HEK293 (cell line): ENCODE measurements at regions of chr22 and their contacts with region 1.

Region 1: DNA sequence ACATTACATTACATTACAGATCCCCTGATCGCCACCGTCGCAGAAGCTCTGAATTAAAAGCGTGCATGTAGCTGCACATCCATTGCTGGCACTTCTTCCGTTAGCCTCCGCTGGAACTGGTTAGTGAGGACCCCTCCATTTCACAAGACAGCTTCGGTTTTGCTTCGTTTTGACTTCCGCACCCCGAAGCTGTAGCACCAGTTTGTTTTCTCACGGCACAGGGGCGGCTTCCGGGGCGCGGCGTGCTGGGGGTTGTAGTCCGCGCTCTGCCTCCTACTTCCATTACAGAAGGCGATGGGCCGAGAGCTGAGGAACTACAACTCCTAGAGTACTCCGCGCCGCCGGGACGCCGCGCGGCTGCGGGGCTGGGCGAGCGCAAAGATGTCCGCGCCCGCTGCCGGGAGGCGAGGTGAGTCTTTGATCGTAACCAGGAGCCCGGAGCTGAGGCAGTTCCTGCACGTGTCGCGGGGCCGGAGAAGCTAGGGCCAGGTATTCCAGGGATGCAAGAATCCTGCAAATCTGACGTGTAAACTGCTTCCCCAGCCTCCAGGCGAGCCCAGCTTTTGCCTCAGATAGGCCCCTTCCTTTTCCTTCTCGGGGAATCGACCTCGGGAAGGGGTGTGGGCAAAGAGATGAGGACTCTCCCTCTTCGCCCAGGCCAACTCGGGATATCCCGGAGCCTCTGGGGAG is at the start of gene PEX26:
- H3K4me3 ChIP-seq: peak within 1 kb of the TSS; percentile 96
- H3K27ac ChIP-seq: peak within 1 kb of the TSS; percentile 67
- H3K4me1 ChIP-seq: no peaks in the 10 kb centered on the region
- CTCF ChIP-seq: no peak

Region 2: DNA sequence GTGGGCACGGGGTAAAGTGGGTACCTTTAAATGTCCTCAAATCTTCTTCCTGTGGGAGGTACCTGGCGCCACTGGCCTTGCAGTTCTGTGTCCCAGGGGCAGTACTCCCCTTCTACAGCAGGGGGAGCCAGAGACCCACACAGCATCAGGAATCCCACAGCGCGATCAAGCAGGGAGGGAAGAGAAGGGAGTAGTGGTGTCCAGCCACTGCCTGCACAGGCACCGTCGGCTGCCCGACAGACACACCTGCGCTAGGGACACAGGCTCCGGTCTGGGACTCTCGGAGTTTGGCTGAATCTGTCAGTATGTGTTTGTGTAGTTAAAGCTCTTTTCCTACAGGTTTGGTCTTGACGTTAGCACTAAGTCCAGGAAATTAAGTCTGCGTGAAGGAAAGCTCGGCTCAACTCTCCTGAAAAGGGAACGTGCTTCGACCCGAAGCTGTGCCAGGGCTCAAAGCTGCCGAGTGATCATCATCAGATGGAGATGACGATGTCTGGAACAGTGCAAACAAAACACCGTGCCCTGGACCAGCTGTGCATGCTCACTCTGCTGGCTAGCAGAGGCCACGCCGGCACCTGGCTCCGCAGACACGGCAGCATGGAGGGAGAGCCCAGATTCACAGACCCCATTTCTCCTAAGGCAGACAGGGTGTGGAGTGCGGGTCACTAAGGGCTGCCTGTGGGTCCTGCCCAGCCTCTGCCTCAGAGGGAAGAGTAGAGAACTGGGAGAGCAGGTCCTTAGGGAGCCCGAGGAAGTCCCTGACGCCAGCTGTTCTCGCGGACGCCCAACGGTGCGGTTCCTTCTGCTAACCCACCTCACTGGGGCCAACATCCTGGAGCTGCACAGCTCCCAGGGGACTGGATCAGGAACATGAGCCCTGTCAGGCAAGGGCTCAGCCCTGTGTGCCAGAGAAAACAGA is 247.5 kb before region 1 on chr22:
- CTCF ChIA-PET with region 1: interaction called, 279 read pairs
- POLR2A ChIA-PET with region 1: interaction called, 5 read pairs
- H3K4me3 ChIP-seq: no peak overlapping the region
- H3K27ac ChIP-seq: no peak overlapping the region
- H3K4me1 ChIP-seq: no peaks in the 10 kb centered on the region
- CTCF ChIP-seq: peak; percentile 96

Region 3: DNA sequence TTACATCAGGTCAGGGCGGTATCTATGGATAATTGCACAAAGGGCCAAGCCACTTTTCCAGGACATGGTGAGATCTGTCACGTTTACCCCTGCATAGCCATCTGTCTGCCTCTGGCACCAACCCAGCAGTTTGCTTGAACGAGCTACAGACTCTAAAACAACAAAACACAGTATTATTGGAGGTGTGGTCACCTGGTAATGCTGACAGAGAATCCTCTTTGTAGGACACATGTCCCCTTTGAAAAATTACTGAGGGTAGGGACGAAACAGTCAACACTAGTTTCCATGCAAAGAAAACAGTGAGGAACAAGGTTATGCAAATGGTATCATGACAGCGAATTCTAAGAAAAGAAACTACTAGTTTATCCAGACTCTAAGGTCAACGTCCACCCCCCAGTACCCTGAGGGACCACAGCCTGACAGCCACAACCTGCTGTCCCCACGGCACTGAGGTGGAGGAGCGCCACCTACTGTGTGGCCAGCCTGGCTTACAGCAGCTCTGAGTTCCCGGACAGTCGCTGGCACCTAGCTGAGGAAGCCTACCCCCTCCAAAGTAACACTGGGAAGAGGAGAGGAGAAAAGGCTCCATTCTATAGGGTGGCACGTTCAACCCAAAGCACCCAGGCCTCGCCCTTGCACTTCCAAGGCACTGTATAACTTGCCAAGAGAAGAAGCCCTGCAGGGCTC is 186.2 kb before region 1 on chr22:
- CTCF ChIA-PET with region 1: interaction called, 29 read pairs
- POLR2A ChIA-PET with region 1: interaction called, 3 read pairs
- H3K4me3 ChIP-seq: no peak overlapping the region
- H3K27ac ChIP-seq: no peak overlapping the region
- H3K4me1 ChIP-seq: peaks cover 3% of the 10 kb centered on the region; the same call in 1 of the 2 replicates
- CTCF ChIP-seq: 0 out of 2 replicates have a peak, but pooled peaks have one; percentile 25

Region 4: DNA sequence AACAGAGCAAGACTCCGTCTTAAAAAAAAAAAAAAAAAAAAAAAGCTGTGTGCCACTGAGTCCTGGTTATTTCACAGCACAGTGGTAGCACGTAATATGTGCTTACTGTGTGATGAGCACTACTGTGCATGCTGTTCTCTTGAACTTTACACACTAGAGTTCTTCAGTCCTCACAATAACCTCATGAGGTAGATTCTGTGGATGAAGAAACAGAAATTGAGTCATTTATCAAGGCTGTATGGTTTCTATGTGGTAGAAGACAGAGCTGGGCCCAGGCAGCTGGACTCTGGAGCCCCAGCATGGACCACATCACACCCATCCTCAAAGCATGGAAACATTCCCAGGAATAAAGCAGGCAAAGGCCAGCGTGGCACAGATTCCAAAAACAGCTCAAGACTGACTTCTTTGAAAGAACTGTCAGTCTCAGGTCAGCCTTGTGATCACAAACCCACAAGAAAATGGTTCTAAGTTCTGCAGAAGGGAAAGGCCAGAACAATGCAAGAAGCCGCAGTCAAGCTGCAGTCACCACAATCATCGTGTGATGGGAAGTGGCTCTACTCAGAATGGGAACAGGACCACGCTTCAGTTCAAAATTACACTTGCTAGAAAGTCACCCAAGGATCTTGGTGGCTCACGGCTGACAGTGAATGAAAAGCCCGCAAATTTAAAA is 102.9 kb before region 1 on chr22:
- CTCF ChIA-PET with region 1: interaction called, 10 read pairs
- POLR2A ChIA-PET with region 1: interaction called, 3 read pairs
- H3K4me3 ChIP-seq: no peak overlapping the region
- H3K27ac ChIP-seq: no peak overlapping the region
- H3K4me1 ChIP-seq: peaks cover 9% of the 10 kb centered on the region
- CTCF ChIP-seq: no peak

Region 5: DNA sequence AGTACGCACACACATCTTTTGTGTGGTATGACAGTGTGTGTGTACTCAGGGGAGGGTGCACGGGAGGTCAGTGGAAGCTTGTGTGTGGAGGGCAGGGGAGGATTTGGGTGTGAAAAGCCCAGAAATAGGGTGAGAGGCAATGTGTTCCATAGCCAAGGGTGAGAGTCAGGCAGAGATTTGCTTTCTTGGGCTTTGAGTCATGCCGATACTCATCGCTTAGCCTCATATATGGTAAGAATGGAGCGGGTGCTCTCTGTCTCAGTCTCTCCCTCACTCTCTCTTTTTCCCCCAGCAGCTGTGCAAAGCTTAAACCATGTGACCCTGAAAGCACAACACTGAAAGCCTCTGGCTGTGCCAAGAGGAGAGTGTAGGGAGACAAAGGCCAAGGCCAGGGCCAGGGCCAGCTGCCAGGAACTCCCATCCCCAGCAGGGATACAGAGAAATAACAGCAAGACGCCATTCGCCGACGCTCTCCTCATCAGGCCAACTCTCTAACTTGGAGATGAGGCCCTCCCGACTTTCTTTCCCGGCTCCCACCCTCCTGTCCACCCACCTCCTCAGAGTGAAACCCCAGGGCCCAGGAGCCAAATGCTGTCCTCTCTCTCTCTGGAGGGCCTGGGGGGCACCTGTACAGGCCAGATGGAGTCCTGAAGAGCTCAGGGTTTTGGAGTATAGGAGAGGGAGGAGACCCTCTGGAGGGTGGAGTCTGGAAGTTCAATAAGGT is 33.1 kb before region 1 on chr22:
- CTCF ChIA-PET with region 1: interaction called, 10 read pairs
- POLR2A ChIA-PET with region 1: no interaction called
- H3K4me3 ChIP-seq: no peak overlapping the region
- H3K27ac ChIP-seq: no peak overlapping the region
- H3K4me1 ChIP-seq: no peaks in the 10 kb centered on the region
- CTCF ChIP-seq: no peak

Region 6: DNA sequence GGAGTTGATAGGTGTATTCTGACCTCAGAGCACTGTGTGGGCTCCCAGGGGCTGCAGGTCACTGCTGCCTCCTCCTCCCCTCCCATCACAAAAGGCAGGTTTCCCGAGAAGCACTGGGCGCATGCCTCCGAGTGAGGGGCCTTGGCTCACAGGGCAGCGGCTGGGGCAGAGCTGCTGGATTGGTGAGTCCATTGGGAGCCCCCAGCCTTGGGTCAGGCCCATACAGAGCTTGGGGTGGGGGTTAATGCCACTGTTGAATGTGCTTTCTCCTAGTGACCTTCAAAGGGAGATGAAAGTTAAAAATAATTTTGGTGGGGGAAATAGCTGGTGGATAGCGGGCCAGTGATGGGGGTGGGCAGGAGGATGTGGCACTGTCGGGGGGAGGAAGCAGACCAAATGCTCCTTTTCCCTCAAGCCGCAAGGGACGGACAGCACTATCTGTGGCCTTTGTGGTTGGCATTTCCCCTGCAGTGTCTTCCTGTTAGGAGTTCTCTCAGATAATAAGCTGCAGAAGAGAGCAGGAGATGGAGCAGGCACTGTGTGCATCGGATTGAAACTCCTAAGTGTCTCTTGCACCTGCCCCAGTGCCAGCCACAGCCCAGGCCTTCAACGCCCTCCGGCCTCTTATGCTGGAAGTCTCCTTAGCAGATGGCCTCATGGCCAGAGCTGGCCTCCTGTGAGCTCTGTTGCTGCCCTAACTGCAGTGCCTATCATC is 36.1 kb after region 1 on chr22:
- CTCF ChIA-PET with region 1: no interaction called
- POLR2A ChIA-PET with region 1: no interaction called
- H3K4me3 ChIP-seq: no peak overlapping the region
- H3K27ac ChIP-seq: no peak overlapping the region
- H3K4me1 ChIP-seq: no peaks in the 10 kb centered on the region
- CTCF ChIP-seq: no peak

Region 7: GRCh38 chr22:18136563-18137320 is 59.0 kb after region 1 on chr22:
- CTCF ChIA-PET with region 1: no interaction called
- POLR2A ChIA-PET with region 1: no interaction called
- H3K4me3 ChIP-seq: no peak overlapping the region
- H3K27ac ChIP-seq: no peak overlapping the region
- H3K4me1 ChIP-seq: no peaks in the 10 kb centered on the region
- CTCF ChIP-seq: no peak